ENCODE measurements at regions of chr7 and their contacts with region 1.

Region 1: GRCh38 chr7:26490650-26491624 is 199.3 kb downstream of the SNX10 start:
- DNase-seq: no peak
- H3K4me3 ChIP-seq: no peak overlapping the region
- H3K27ac ChIP-seq: no peak overlapping the region
- H3K4me1 ChIP-seq: no peaks in the 10 kb centered on the region
- H3K27me3 ChIP-seq: no peaks in the 10 kb centered on the region
- CTCF ChIP-seq: no peak
- POLR2A ChIP-seq: no peak

Region 2: DNA sequence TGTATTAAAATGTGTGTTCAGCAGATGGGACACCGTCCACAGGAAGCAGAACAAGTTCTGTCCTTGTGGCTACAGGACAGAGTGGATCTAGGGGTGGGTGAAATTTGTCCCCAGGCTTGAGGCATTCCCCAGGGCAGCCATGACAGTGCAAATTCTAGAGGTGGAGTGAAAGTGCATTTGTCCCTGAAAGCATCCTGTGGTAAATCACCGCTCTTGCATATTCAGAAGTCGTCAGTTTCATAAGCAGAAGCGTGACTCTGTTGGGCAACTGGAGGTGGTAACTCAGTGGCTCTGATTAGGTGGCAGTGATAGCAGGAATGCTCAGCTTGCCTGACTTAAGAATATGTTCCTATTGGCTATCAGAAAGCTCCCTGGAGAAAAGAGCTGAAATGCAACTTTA is 102.7 kb before region 1 on chr7:
- intact Hi-C with region 1: loop called in 1 of 2 experiments (anchors 10 kb)
- DNase-seq: no peak
- H3K4me3 ChIP-seq: no peak overlapping the region
- H3K27ac ChIP-seq: no peak overlapping the region
- H3K4me1 ChIP-seq: no peaks in the 10 kb centered on the region
- H3K27me3 ChIP-seq: no peaks in the 10 kb centered on the region
- CTCF ChIP-seq: no peak
- POLR2A ChIP-seq: no peak

Region 3: GRCh38 chr7:26688936-26689506 is 198.1 kb after region 1 on chr7:
- intact Hi-C with region 1: no loop called
- DNase-seq: no peak
- H3K4me3 ChIP-seq: no peak overlapping the region
- H3K27ac ChIP-seq: no peak overlapping the region
- H3K4me1 ChIP-seq: peaks cover 4 to 27% of the 10 kb centered on the region in 2 donors
- H3K27me3 ChIP-seq: no peaks in the 10 kb centered on the region
- CTCF ChIP-seq: no peak
- POLR2A ChIP-seq: no peak

Measured in adrenal gland (tissue), 19 donors.